Ovary (tissue), 10 donors: ENCODE measurements at regions of chr19 and their contacts with region 1.

Region 1: DNA sequence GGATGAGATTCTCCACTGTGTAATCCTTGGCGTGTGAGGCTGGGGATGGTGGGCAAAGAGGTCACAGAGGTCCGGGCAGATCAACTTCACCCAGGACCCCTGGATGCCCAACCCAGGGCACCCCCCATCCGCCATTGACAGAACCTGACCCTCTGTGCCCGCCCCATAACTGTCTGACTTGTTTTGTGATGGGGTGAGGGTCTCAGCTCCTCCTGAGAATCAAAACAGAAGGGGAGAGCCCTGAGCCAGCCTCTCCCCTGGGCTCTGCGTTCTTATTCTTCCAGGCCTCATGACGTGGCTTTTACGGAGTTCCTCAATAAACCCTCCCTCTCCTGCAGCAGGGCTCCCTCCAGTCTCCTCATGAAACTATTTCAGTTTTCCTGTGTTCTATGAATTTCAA is 3.5 kb downstream of the LILRA6 start:
- DNase-seq: no peak
- H3K4me3 ChIP-seq: no peak overlapping the region
- H3K27ac ChIP-seq: no peak overlapping the region
- H3K4me1 ChIP-seq: no peaks in the 10 kb centered on the region
- H3K27me3 ChIP-seq: no peaks in the 10 kb centered on the region
- CTCF ChIP-seq: no peak
- EP300 ChIP-seq: no peak
- POLR2A ChIP-seq: no peak

Region 2: GRCh38 chr19:54218960-54219661 is 19.9 kb before region 1 on chr19:
- intact Hi-C with region 1: loop called in 2 of 4 experiments (anchors 2 kb)
- DNase-seq: no peak
- H3K4me3 ChIP-seq: no peak overlapping the region
- H3K27ac ChIP-seq: no peak overlapping the region
- H3K4me1 ChIP-seq: no peaks in the 10 kb centered on the region
- H3K27me3 ChIP-seq: no peaks in the 10 kb centered on the region
- CTCF ChIP-seq: no peak
- EP300 ChIP-seq: no peak
- POLR2A ChIP-seq: no peak

Region 3: GRCh38 chr19:54281007-54281728 is 42.1 kb after region 1 on chr19 and contains the start of gene LILRB2:
- intact Hi-C with region 1: no loop called
- DNase-seq: no peak
- H3K4me3 ChIP-seq: no peak within 1 kb of the TSS
- H3K27ac ChIP-seq: no peak within 1 kb of the TSS
- H3K4me1 ChIP-seq: no peaks in the 10 kb centered on the region
- H3K27me3 ChIP-seq: no peaks in the 10 kb centered on the region
- CTCF ChIP-seq: no peak
- EP300 ChIP-seq: no peak
- POLR2A ChIP-seq: no peak
- total RNA-seq, gene LILRB2: 0.24 to 15.1 (median 2.1) TPM